Endothelial cell of umbilical vein (primary cell): ENCODE measurements at regions of chr15 and their contacts with region 1.

Region 1: GRCh38 chr15:81091889-81092558 is 42.0 kb upstream of the CFAP161 start:
- DNase-seq: peak; percentile 95
- H3K4me3 ChIP-seq: peak overlapping the region in 1 of 3 experiments; percentile 16
- H3K27ac ChIP-seq: peak overlapping the region; percentile 51
- H3K4me1 ChIP-seq: peaks cover 14% of the 10 kb centered on the region
- H3K27me3 ChIP-seq: no peaks in the 10 kb centered on the region
- CTCF ChIP-seq: no peak
- POLR2A ChIP-seq: no peak

Region 2: GRCh38 chr15:80915472-80915871 is 176.6 kb before region 1 on chr15:
- CTCF ChIA-PET with region 1: no interaction called
- POLR2A ChIA-PET with region 1: no interaction called
- dilution Hi-C with region 1: no loop called
- intact Hi-C with region 1: no loop called
- DNase-seq: no peak
- H3K4me3 ChIP-seq: no peak overlapping the region
- H3K27ac ChIP-seq: no peak overlapping the region
- H3K4me1 ChIP-seq: no peaks in the 10 kb centered on the region
- H3K27me3 ChIP-seq: no peaks in the 10 kb centered on the region
- CTCF ChIP-seq: no peak
- POLR2A ChIP-seq: no peak

Region 3: DNA sequence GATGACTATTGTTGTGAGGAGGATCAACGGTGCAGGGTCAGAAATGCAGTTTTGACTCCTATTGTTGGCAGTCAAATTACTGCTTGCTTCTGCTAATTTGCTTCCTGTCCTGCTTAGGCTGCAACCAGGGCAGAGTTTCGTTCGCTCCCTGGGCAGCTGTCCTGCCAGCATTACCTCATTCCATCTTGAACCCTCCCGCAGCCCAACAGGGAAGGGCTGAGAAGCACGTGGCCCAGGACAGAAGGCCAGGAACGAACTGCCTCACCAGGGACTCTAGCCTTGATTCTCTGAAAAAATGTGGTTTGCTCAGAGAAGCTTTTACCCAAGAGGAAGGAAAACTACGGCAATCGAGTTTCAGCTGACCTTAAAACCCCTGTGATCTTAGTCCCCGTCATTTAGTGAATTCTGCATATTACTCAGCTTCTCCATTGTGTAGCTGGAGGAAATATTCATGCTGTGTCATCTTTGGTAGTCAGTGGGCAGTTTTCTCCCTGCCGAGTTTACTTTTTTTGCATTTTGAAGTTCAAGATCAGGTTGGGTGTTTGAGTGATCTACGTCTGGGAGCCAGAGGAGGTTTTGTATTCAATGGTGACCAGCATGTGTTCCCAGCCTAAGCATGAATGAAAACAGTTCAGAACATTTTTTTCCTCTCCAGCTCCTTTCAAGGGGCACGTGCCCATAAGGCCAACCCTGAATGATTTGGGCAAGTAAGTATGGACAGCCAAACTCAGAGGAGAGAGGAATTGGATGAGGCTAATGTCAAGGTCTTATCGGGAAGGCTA is 68.3 kb before region 1 on chr15:
- CTCF ChIA-PET with region 1: interaction called, 5 read pairs
- POLR2A ChIA-PET with region 1: no interaction called
- dilution Hi-C with region 1: no loop called
- intact Hi-C with region 1: loop called (anchors 2 kb)
- DNase-seq: peak; percentile 91
- H3K4me3 ChIP-seq: no peak overlapping the region
- H3K27ac ChIP-seq: peak overlapping the region; percentile 97
- H3K4me1 ChIP-seq: peaks cover 23% of the 10 kb centered on the region
- H3K27me3 ChIP-seq: no peaks in the 10 kb centered on the region
- CTCF ChIP-seq: no peak
- POLR2A ChIP-seq: no peak